Left colon (tissue), 2 donors: ENCODE measurements at regions of chr6 and their contacts with region 1.

Region 1: GRCh38 chr6:52419809-52420670 is at the start of gene EFHC1:
- DNase-seq: peak; percentile 98 to 99
- ATAC-seq: peak; percentile 97
- total RNA-seq, gene EFHC1: 11.1 to 13.8 TPM

Region 2: GRCh38 chr6:52361945-52362442 is 58.0 kb before region 1 on chr6 and contains the start of gene PAQR8:
- intact Hi-C with region 1: no loop called
- DNase-seq: peak; percentile 74 to 86
- ATAC-seq: peak; percentile 86
- total RNA-seq, gene PAQR8: 152 to 158 TPM

Region 3: GRCh38 chr6:52517502-52518278 is 97.7 kb after region 1 on chr6:
- intact Hi-C with region 1: loop called in 1 of 2 experiments (anchors 10 kb)
- DNase-seq: peak; percentile 61 to 84
- ATAC-seq: peak; percentile 75

Region 4: GRCh38 chr6:52577022-52577777 is 157.2 kb after region 1 on chr6 and contains the start of gene TRAM2:
- intact Hi-C with region 1: loop called in 1 of 2 experiments (anchors 5 kb)
- DNase-seq: peak; percentile 79 to 92
- ATAC-seq: peak; percentile 83
- total RNA-seq, gene TRAM2: 15.3 to 23.7 TPM

Region 5: DNA sequence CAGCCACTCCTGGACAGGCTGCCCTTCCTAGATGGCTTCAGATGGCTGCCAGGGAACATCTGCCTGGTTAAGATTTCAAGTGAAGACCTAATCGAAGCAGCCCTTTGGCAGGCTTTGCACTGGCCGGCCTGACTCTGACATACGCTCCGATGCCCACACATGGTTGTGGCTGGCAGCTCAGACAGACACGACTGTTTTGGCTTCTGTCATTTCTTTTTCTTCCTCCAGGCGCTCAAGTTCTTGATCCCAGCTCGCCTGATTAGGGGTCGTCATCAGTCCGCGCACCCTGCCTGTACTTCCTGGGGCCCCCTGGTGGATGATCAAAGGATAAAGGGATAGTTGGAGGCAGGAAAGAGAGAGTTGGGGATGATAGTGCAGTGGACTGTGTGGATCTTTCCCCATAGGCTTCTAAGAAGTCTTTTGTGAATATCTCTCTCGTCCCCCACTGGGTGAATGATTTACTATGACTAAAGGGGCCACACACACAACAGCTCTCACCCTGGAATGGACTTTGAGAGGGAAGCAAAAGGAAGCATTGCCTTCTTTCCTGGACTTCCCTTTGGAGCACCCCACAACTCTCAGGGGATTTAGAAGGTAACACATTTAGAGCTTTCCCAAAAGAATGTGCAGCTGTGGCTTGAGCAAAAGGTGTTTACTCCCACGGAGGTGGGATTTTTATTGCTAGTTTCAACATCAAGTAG is 178.2 kb after region 1 on chr6:
- intact Hi-C with region 1: loop called in 1 of 2 experiments (anchors 5 kb)
- DNase-seq: peak; percentile 34 to 40
- ATAC-seq: peak; percentile 54

Region 6: GRCh38 chr6:52664186-52664990 is 244.3 kb after region 1 on chr6:
- intact Hi-C with region 1: loop called (anchors 2 to 5 kb)
- DNase-seq: peak; percentile 92 to 94
- ATAC-seq: peak; percentile 97